Posterior vena cava (tissue), 2 donors: ENCODE measurements at regions of chr18 and their contacts with region 1.

Region 1: DNA sequence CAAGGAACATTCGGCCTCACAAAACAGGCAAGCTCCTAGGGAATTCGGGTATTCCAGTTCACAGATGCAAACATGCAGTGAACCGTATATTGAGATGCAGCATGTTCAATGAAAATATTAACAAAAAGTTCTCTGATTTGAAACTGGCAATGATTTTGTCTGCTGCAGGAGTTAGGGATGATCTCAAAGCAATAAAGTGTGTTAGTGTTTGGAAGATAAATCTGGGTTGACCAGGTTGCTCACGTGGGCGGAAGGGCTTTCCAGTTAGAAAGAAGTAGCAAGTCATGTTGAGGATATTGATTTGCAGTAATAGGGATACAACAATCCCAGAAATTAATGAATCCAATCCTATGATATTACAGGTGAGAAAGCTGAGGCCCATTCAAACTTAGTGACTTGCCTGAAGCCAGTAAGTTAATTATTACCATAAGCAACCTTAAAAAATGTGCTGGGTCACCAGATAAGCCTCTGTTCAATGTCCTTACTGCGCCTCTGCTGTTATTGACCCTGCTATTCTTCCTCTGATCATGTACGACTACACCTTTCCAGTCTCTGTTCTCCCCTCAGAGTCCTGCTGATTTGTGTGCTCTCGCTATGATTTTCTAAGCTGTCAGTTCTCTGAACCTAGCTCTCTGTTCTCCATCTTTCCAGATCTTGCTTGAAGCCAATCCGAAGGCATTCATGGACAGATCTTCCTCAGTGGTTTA is 370.8 kb downstream of the DSEL start:
- DNase-seq: no peak

Region 2: DNA sequence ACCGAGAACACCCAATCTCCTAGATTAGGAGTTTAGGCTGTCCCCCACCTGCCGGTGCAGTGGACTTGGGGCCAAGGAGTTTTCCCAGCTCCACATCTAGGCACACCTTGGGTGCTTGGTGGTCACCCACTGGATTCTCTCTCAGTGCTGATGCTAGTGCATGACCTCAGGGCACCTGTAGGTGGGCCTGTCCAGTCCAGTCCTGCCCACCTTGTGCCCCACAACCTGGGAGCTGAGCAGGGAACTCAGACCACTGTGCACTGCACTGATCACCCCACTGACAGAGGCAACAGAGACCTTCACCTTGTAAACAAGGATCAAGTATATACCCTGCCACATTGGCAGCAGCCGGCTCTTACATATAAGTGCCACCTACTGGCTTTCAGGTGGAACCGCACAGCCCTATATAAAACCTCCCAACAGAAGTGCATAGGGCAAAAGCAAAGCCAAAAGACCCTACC is 529.2 kb before region 1 on chr18:
- intact Hi-C with region 1: loop called in 1 of 2 experiments (anchors 5 kb)
- DNase-seq: no peak

Region 3: GRCh38 chr18:67347438-67347837 is 201.7 kb after region 1 on chr18:
- intact Hi-C with region 1: no loop called
- DNase-seq: no peak